ENCODE measurements at regions of chr11 and their contacts with region 1.

Region 1: DNA sequence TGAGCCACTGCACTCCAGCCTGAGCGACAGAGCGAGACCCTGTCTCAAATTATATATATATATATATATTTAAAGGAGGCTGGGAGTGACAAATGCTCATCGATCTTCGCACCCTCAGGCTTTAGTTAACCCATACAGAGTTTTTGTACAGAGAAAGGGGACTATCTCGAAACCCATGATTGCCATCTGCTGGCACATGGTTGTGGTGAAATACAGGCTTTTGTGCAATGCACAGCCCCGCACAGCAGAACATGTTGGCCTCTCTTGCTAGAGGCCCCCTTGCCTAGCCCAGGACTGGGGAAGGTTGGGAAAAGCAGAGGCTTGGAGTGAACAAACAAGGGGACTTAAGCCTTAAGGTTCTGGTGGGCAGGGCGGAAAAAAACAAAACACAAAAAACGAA is 3.6 kb downstream of the MYBPC3 start:
- DNase-seq: no peak
- H3K4me3 ChIP-seq: no peak overlapping the region
- H3K27ac ChIP-seq: no peak overlapping the region
- H3K4me1 ChIP-seq: no peaks in the 10 kb centered on the region
- H3K27me3 ChIP-seq: no peaks in the 10 kb centered on the region
- CTCF ChIP-seq: peak; percentile 15 to 20

Region 2: DNA sequence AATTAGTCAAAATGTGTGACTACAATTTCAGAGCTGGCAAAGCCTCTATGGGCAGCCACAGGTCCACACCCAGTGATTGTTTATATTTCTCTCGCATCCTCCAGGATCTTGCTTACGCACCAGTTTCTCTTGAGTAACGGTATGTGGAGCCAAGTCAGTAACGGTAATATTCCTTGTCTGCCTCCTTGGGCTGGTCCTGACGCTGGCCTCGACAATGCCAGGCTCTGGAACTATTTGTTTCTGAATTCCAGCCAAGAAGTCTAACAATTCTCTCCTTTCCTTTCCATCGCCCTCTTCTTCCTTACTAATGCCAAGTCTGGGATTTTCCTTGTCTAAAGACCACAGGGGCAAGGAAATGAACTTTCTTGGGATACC is 509.3 kb after region 1 on chr11:
- CTCF ChIA-PET with region 1: no interaction called
- dilution Hi-C with region 1: loop called (anchors 10 kb)
- in situ Hi-C with region 1: no loop called
- intact Hi-C with region 1: no loop called
- DNase-seq: peak; percentile 60
- H3K4me3 ChIP-seq: no peak overlapping the region
- H3K27ac ChIP-seq: no peak overlapping the region
- H3K4me1 ChIP-seq: no peaks in the 10 kb centered on the region
- H3K27me3 ChIP-seq: no peaks in the 10 kb centered on the region
- CTCF ChIP-seq: no peak

Measured in mammary epithelial cell (primary cell).